Right ventricle myocardium inferior (tissue), 1 donor: ENCODE measurements at regions of chr14 and their contacts with region 1.

Region 1: DNA sequence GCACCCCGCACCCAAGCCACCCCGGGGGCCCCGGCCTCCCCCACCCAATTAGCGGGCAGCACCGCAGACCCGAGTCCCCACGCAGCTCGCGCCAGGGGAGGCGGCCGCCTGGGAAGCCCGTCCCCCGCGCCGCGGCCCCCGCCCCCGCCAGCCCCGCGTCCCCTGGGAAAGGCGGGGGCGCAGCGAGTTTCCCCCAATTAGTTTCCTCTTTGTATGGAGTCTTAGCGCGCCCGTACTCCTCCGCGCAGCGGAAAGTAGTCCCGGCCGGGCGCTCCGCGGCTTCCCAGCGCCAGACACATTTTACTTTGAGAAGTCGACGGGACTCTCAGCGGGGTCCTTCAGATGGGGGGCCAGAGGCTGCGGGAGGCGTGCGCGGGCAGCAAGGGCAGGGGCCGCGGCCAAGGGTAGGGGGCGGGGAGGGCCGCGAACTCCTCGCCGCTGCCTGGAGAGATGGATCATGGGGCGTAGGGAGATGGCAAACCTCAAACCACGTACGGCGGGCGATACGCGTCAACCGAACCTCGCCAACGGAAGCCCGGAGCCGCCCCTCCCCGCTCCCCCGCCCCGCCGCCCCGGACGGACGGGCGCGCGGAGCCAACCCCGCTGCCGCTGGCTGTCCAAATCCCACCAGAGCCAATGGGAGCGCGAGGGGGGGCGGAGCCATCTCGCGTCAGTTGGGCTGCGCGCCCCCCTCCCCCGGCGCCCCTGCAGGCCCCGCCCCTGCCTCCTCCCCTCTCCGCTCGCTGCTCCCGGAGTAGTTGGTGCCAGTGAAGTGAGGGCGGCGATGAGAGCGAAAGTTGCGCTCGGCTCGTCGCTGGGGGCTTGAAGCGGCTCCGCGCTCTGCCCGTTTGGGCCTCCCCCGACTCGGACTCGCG is at the start of gene RCOR1:
- DNase-seq: peak; percentile 98
- ATAC-seq: peak; percentile 96
- total RNA-seq, gene RCOR1: 11.9 TPM

Region 2: DNA sequence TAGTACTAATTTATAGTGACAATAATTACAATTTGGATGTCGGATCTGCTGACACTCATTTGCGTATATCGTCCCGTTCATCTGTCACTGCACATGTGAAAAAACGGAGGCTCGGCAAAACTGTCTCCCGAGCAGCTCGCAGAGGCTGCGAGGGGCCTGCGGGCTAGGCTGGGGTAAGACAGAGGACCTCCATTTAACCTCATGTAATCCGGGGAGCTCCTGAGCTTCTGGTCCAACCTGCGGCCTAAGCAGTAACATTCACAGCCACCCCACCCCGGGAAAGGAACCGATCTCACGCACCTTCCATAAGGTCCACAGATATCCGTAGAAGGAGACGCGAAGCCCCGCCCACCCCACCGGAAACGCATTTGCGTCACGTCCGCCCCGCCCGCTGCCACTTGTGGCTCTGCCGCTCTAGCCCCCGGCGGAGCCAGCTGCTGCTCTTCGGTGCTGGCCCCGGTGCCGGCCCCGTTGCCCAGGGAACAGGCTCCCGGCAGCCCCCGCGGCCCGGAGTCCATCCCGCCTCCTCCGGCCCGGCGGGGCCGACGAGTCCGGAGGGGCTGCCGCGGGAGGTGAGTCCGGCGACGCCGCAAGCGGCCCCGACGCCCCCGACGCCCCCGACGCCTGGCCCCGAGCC is 229.5 kb before region 1 on chr14 and contains the starts of genes CINP and TECPR2:
- intact Hi-C with region 1: loop called (anchors 10 kb)
- DNase-seq: peak; percentile 98
- ATAC-seq: peak; percentile 99
- total RNA-seq, gene CINP: 31.1 TPM
- total RNA-seq, gene TECPR2: 19.4 TPM

Region 3: DNA sequence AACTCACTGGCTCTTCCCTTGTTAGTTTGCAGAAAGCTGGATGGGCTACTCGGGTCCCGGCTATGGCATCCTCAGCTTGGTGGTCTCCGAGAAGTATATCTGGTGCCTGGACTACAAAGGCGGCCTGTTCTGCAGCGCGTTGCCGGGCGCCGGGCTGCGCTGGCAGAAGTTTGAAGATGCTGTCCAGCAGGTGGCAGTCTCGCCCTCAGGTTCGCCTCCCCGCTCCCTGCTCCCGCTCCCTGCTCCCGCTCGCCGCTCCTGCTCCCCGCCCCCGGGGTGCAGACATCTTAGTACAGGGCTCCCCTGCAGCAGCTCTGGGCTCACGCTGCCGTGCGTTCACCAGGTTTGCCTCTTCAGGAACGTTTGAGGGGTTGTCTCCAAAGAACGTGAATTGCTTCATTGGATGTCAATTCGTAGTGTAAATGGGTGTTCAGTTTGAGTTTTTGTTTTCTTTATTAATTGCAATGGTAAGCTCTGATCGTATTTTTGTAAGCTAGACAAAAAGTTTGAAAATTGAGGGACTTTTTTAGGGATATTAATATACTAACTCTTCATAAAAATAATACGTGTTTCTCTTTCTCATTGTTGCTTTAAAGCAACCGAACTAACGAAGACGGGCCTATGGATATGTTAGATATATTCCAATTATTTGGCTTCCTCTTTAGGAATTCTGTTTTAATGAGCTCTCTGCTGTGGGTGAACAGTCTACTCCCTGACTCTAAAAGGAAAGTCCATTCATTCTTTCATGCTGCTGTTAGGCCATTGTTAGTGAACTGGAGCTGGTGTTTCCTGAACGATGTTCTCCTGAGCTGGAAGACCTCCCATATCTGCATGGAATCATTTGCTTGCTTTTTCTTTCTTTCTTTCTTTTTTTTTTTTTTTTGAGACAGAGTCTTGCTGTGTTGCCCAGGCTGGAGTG is 153.9 kb before region 1 on chr14:
- intact Hi-C with region 1: loop called (anchors 10 kb)
- DNase-seq: peak; percentile 91
- ATAC-seq: peak; percentile 93

Region 4: DNA sequence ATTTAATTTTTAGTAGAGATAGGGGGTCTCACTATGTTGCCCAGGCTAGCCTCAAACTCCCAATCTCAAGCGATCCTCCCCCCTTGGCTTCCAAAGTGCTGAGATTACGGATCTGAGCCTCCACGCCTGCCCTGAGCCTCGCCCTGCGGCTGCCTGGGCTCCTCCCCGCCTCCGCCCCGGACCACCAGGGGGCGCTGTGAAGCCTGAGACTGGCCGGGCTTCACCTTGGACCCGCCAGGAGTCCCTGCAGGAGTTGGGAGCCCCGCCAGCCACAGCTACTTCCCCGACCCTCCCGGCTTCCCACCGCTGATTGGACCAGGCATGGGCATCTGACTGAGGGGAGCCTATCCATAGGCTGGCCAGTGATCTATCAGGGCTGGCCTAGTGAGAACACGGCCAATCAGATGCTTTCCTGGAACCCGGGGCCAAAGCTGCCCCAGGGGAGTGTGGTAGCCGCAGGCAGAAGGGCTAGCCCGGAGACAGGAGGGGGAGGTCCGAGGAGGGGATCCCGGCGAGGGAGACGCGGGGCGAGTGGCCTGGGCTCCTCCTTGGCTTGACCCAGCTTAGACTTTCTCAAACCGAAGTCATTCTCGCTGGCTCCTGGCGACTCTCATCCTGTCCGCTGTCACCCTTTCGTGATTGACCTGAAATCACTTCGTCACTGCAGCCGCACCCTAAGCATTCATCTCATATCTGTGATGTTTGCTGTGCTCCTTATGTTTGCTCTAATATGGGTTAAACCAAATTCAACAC is 67.5 kb before region 1 on chr14:
- intact Hi-C with region 1: loop called (anchors 1 kb)
- DNase-seq: peak; percentile 99
- ATAC-seq: peak; percentile 98

Region 5: DNA sequence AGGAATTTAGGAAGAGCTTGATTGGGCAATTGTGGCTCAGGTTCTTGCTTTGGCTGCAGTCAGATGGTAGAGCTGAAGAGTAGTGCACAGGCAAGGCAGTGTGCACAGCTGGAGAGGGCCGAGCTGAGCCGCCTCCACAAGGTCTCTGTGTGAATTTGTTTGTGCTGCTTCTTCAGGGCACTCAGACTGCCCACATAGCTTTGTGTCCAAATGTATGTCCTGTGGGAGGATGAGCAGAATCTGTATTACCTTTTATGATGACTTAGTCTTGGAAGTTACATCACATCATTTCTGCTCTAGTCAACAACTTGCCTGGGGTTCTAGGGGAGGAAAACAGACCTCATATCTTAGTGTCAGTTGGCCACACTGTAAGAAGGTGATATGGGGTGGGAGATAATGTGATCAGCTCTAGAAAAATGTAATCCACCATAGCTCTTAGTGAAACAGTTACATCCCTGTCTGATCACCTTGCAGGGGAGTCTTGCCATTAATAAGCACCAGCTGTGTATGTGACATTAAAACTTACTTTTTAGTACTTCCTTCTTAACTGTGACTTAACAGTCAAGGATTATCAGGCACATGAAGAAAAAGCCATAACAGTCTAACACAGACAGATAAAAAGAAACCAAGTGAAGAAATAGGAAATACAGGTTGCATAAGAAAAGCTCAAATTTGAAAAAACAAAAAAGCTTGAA is 53.8 kb after region 1 on chr14:
- intact Hi-C with region 1: no loop called
- DNase-seq: no peak
- ATAC-seq: no peak